Naive thymus-derived CD4-positive, alpha-beta T cell (primary cell): ENCODE measurements at regions of chr11 and their contacts with region 1.

Region 1: GRCh38 chr11:130916238-130916855 is at the start of gene SNX19:
- DNase-seq: peak; percentile 83 to 96 (median 89)
- ATAC-seq: peak; percentile 100
- H3K4me3 ChIP-seq: peak within 1 kb of the TSS; percentile 54
- H3K4me3 Mint-ChIP-seq: peak within 1 kb of the TSS; percentile 83 to 91 (median 88)
- H3K27ac ChIP-seq: peak within 1 kb of the TSS; percentile 84
- H3K27ac Mint-ChIP-seq: peak within 1 kb of the TSS; percentile 85 to 95 (median 92)
- H3K4me1 ChIP-seq: peaks cover 9 to 16% of the 10 kb centered on the region in 2 donors
- H3K4me1 Mint-ChIP-seq: peaks cover 5 to 53% (median 40%) of the 10 kb centered on the region in 7 donors
- H3K27me3 ChIP-seq: no peaks in the 10 kb centered on the region
- H3K27me3 Mint-ChIP-seq: peaks cover under 1 to 12% (median 10%) of the 10 kb centered on the region in 5 donors
- total RNA-seq, gene SNX19: 53.9 to 101 (median 57.1) TPM

Region 2: GRCh38 chr11:129279326-129280026 is 1636.9 kb before region 1 on chr11:
- CTCF ChIA-PET with region 1: no interaction called
- POLR2A ChIA-PET with region 1: no interaction called
- intact Hi-C with region 1: loop called in 1 of 2 experiments (anchors 5 kb)
- DNase-seq: peak; percentile 70 to 90 (median 82)
- ATAC-seq: peak; percentile 94
- H3K4me3 ChIP-seq: peak overlapping the region; percentile 58
- H3K4me3 Mint-ChIP-seq: peak overlapping the region; percentile 74 to 91 (median 86)
- H3K27ac ChIP-seq: peak overlapping the region; percentile 49
- H3K27ac Mint-ChIP-seq: peak overlapping the region; percentile 69 to 91 (median 80)
- H3K4me1 ChIP-seq: peaks cover 4 to 6% of the 10 kb centered on the region in 2 donors
- H3K4me1 Mint-ChIP-seq: peaks cover 14 to 43% (median 33%) of the 10 kb centered on the region in 7 donors
- H3K27me3 ChIP-seq: peaks cover 0 to 3% of the 10 kb centered on the region in 2 donors
- H3K27me3 Mint-ChIP-seq: peaks cover 8 to 32% (median 17%) of the 10 kb centered on the region in 5 donors

Region 3: GRCh38 chr11:130561441-130561881 is 354.9 kb before region 1 on chr11:
- CTCF ChIA-PET with region 1: no interaction called
- POLR2A ChIA-PET with region 1: no interaction called
- intact Hi-C with region 1: no loop called
- DNase-seq: no peak
- ATAC-seq: no peak
- H3K4me3 ChIP-seq: no peak overlapping the region
- H3K4me3 Mint-ChIP-seq: no peak overlapping the region
- H3K27ac ChIP-seq: no peak overlapping the region
- H3K27ac Mint-ChIP-seq: no peak overlapping the region
- H3K4me1 ChIP-seq: no peaks in the 10 kb centered on the region
- H3K4me1 Mint-ChIP-seq: no peaks in the 10 kb centered on the region
- H3K27me3 ChIP-seq: no peaks in the 10 kb centered on the region
- H3K27me3 Mint-ChIP-seq: peaks cover 0 to 18% (median 2%) of the 10 kb centered on the region in 5 donors

Region 4: GRCh38 chr11:130861902-130862860 is 54.2 kb before region 1 on chr11:
- CTCF ChIA-PET with region 1: interaction called, 8 read pairs
- POLR2A ChIA-PET with region 1: no interaction called
- intact Hi-C with region 1: loop called (anchors 2 to 5 kb)
- DNase-seq: peak; percentile 71 to 87 (median 82)
- ATAC-seq: peak; percentile 95
- H3K4me3 ChIP-seq: no peak overlapping the region
- H3K4me3 Mint-ChIP-seq: peak overlapping the region in 1 of 10 donors; percentile 10
- H3K27ac ChIP-seq: no peak overlapping the region
- H3K27ac Mint-ChIP-seq: peak overlapping the region in 3 of 9 donors; percentile 26 to 72 (median 32)
- H3K4me1 ChIP-seq: no peaks in the 10 kb centered on the region
- H3K4me1 Mint-ChIP-seq: peaks cover 0 to 7% (median 6%) of the 10 kb centered on the region in 7 donors
- H3K27me3 ChIP-seq: no peaks in the 10 kb centered on the region
- H3K27me3 Mint-ChIP-seq: peaks cover 0 to 5% (median 1%) of the 10 kb centered on the region in 5 donors

Region 5: GRCh38 chr11:130894322-130895025 is 21.9 kb before region 1 on chr11:
- CTCF ChIA-PET with region 1: interaction called, 3 read pairs
- POLR2A ChIA-PET with region 1: interaction called, 7 read pairs
- intact Hi-C with region 1: loop called (anchors 1 to 2 kb)
- DNase-seq: peak; percentile 33 to 64 (median 49)
- ATAC-seq: peak; percentile 94
- H3K4me3 ChIP-seq: no peak overlapping the region
- H3K4me3 Mint-ChIP-seq: no peak overlapping the region
- H3K27ac ChIP-seq: no peak overlapping the region
- H3K27ac Mint-ChIP-seq: peak overlapping the region in 2 of 9 donors; percentile 22 to 38
- H3K4me1 ChIP-seq: no peaks in the 10 kb centered on the region
- H3K4me1 Mint-ChIP-seq: peaks cover 0 to 9% (median 9%) of the 10 kb centered on the region in 7 donors
- H3K27me3 ChIP-seq: no peaks in the 10 kb centered on the region
- H3K27me3 Mint-ChIP-seq: no peaks in the 10 kb centered on the region

Region 6: DNA sequence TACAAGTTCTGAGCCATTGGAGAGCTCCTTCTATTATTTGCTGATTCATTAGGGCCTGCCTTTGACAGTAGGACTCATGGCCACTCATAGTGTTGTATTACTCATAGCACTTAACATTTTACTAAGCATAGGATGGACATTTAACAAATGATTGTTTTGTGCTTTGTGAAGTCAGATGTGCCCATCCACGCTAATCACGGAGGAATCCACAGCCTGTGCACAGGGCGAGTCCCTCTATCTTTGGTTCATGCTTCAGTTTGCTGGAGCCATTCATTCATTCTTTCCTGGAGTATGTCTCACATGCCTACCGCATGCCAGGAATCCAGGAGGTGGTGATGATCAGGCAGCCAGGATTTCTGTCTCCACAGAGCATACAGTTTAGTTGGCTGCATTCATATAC is 708.2 kb after region 1 on chr11:
- CTCF ChIA-PET with region 1: no interaction called
- POLR2A ChIA-PET with region 1: no interaction called
- intact Hi-C with region 1: no loop called
- DNase-seq: no peak
- ATAC-seq: no peak
- H3K4me3 ChIP-seq: no peak overlapping the region
- H3K4me3 Mint-ChIP-seq: no peak overlapping the region
- H3K27ac ChIP-seq: no peak overlapping the region
- H3K27ac Mint-ChIP-seq: no peak overlapping the region
- H3K4me1 ChIP-seq: no peaks in the 10 kb centered on the region
- H3K4me1 Mint-ChIP-seq: no peaks in the 10 kb centered on the region
- H3K27me3 ChIP-seq: no peaks in the 10 kb centered on the region
- H3K27me3 Mint-ChIP-seq: peaks cover 7 to 23% (median 15%) of the 10 kb centered on the region in 5 donors